ENCODE measurements at regions of chr2 and their contacts with region 1.

Region 1: GRCh38 chr2:232550354-232551249 is at the starts of genes EIF4E2 and TIGD1:
- DNase-seq: peak; percentile 89
- H3K4me3 ChIP-seq: peak within 1 kb of the TSS; percentile 71 to 79 (median 78)
- H3K27ac ChIP-seq: peak within 1 kb of the TSS; percentile 88
- H3K4me1 ChIP-seq: peaks cover 9% of the 10 kb centered on the region
- H3K27me3 ChIP-seq: no peaks in the 10 kb centered on the region
- CTCF ChIP-seq: peak in 1 of 2 donors; percentile 34
- total RNA-seq, gene EIF4E2: 55.2 to 74.6 TPM
- total RNA-seq, gene TIGD1: 3.0 to 3.2 TPM

Region 2: GRCh38 chr2:232490224-232491138 is 60.1 kb before region 1 on chr2:
- CTCF ChIA-PET with region 1: no interaction called
- dilution Hi-C with region 1: loop called (anchors 5 kb)
- in situ Hi-C with region 1: no loop called
- intact Hi-C with region 1: no loop called
- DNase-seq: no peak
- H3K4me3 ChIP-seq: no peak overlapping the region
- H3K27ac ChIP-seq: no peak overlapping the region
- H3K4me1 ChIP-seq: no peaks in the 10 kb centered on the region
- H3K27me3 ChIP-seq: peaks cover 26% of the 10 kb centered on the region
- CTCF ChIP-seq: no peak

Region 3: GRCh38 chr2:232563580-232563979 is 13.0 kb after region 1 on chr2:
- CTCF ChIA-PET with region 1: no interaction called
- dilution Hi-C with region 1: no loop called
- in situ Hi-C with region 1: no loop called
- intact Hi-C with region 1: no loop called
- DNase-seq: peak; percentile 49
- H3K4me3 ChIP-seq: no peak overlapping the region
- H3K27ac ChIP-seq: no peak overlapping the region
- H3K4me1 ChIP-seq: peaks cover 12% of the 10 kb centered on the region
- H3K27me3 ChIP-seq: no peaks in the 10 kb centered on the region
- CTCF ChIP-seq: no peak

Region 4: GRCh38 chr2:232588680-232589585 is 38.3 kb after region 1 on chr2:
- CTCF ChIA-PET with region 1: no interaction called
- dilution Hi-C with region 1: no loop called
- in situ Hi-C with region 1: no loop called
- intact Hi-C with region 1: loop called (anchors 1 kb)
- DNase-seq: peak; percentile 78
- H3K4me3 ChIP-seq: no peak overlapping the region
- H3K27ac ChIP-seq: peak overlapping the region; percentile 36
- H3K4me1 ChIP-seq: peaks cover 37% of the 10 kb centered on the region
- H3K27me3 ChIP-seq: no peaks in the 10 kb centered on the region
- CTCF ChIP-seq: no peak

Measured in mammary epithelial cell (primary cell).